ENCODE measurements at regions of chr20 and their contacts with region 1.

Region 1: GRCh38 chr20:19889011-19889953 is 127.9 kb upstream of the NAA20 start:
- DNase-seq: peak; percentile 48
- H3K4me3 Mint-ChIP-seq: peak overlapping the region; percentile 60
- H3K27ac Mint-ChIP-seq: peak overlapping the region; percentile 94
- H3K4me1 Mint-ChIP-seq: peaks cover 48% of the 10 kb centered on the region
- H3K27me3 Mint-ChIP-seq: no peaks in the 10 kb centered on the region
- CTCF ChIP-seq: no peak

Region 2: DNA sequence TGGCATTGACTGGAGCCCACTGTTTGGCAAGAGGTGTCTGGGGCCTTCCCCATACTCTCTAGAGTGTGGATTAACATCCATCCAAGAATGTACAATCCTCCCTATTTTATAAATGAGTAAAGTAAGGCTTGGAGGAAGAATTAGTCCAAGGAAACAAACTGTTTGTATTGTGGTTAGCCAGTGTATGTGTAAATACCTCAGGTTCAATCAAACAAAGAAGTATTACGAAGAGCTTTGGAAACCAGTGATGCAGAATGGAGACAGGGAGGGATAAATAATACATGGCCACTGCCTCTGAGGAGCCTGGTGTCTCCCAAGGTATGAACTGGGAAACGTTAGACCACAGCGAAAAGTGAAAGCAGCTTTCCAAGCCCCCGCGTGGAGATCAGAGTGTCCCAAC is 357.8 kb before region 1 on chr20:
- CTCF ChIA-PET with region 1: no interaction called
- POLR2A ChIA-PET with region 1: no interaction called
- intact Hi-C with region 1: no loop called
- DNase-seq: no peak
- H3K4me3 Mint-ChIP-seq: no peak overlapping the region
- H3K27ac Mint-ChIP-seq: no peak overlapping the region
- H3K4me1 Mint-ChIP-seq: no peaks in the 10 kb centered on the region
- H3K27me3 Mint-ChIP-seq: no peaks in the 10 kb centered on the region
- CTCF ChIP-seq: no peak

Region 3: GRCh38 chr20:19802492-19803158 is 86.7 kb before region 1 on chr20:
- CTCF ChIA-PET with region 1: interaction called, 18 read pairs
- POLR2A ChIA-PET with region 1: interaction called, 8 read pairs
- intact Hi-C with region 1: no loop called
- DNase-seq: peak; percentile 72
- H3K4me3 Mint-ChIP-seq: no peak overlapping the region
- H3K27ac Mint-ChIP-seq: peak overlapping the region; percentile 9
- H3K4me1 Mint-ChIP-seq: peaks cover 18% of the 10 kb centered on the region
- H3K27me3 Mint-ChIP-seq: no peaks in the 10 kb centered on the region
- CTCF ChIP-seq: peak; percentile 21

Region 4: GRCh38 chr20:19828232-19828631 is 61.0 kb before region 1 on chr20:
- CTCF ChIA-PET with region 1: interaction called, 44 read pairs
- POLR2A ChIA-PET with region 1: interaction called, 8 read pairs
- intact Hi-C with region 1: no loop called
- DNase-seq: peak; percentile 72
- H3K4me3 Mint-ChIP-seq: peak overlapping the region; percentile 9
- H3K27ac Mint-ChIP-seq: peak overlapping the region; percentile 60
- H3K4me1 Mint-ChIP-seq: peaks cover 17% of the 10 kb centered on the region
- H3K27me3 Mint-ChIP-seq: no peaks in the 10 kb centered on the region
- CTCF ChIP-seq: peak; percentile 46

Region 5: GRCh38 chr20:19913927-19914614 is 24.8 kb after region 1 on chr20:
- CTCF ChIA-PET with region 1: interaction called, 7 read pairs
- POLR2A ChIA-PET with region 1: interaction called, 107 read pairs
- intact Hi-C with region 1: no loop called
- DNase-seq: peak; percentile 94
- H3K4me3 Mint-ChIP-seq: no peak overlapping the region
- H3K27ac Mint-ChIP-seq: peak overlapping the region; percentile 82
- H3K4me1 Mint-ChIP-seq: peaks cover 46% of the 10 kb centered on the region
- H3K27me3 Mint-ChIP-seq: no peaks in the 10 kb centered on the region
- CTCF ChIP-seq: no peak

Region 6: DNA sequence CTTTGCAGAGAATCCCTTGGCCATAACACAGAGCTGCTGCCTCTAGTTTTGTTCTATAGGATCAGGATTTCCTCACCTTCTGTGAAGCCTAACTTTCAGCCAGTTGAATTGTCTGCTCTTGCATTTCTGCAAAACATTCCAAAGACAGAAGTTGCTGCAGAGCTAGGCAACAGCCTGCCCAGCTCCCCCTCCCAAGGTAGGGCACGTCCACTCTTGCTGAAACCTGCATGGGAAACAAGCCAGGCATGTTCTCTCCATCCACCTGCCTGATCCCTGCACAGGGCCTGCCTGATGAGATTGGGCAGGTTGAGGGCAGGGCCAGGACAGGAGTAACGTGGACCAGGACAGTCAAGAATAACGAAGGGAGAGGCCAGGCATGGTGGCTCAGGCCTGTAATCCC is 68.9 kb after region 1 on chr20:
- CTCF ChIA-PET with region 1: interaction called, 4 read pairs
- POLR2A ChIA-PET with region 1: interaction called, 21 read pairs
- intact Hi-C with region 1: no loop called
- DNase-seq: peak; percentile 67
- H3K4me3 Mint-ChIP-seq: no peak overlapping the region
- H3K27ac Mint-ChIP-seq: peak overlapping the region; percentile 61
- H3K4me1 Mint-ChIP-seq: peaks cover 6% of the 10 kb centered on the region
- H3K27me3 Mint-ChIP-seq: no peaks in the 10 kb centered on the region
- CTCF ChIP-seq: no peak

Region 7: GRCh38 chr20:19995220-19995863 is 106.1 kb after region 1 on chr20:
- CTCF ChIA-PET with region 1: interaction called, 41 read pairs
- POLR2A ChIA-PET with region 1: interaction called, 42 read pairs
- intact Hi-C with region 1: loop called (anchors 1 kb)
- DNase-seq: peak; percentile 70
- H3K4me3 Mint-ChIP-seq: no peak overlapping the region
- H3K27ac Mint-ChIP-seq: peak overlapping the region; percentile 86
- H3K4me1 Mint-ChIP-seq: peaks cover 28% of the 10 kb centered on the region
- H3K27me3 Mint-ChIP-seq: no peaks in the 10 kb centered on the region
- CTCF ChIP-seq: peak; percentile 78

Measured in MCF 10A (cell line).